ENCODE measurements at regions of chr6 and their contacts with region 1.

Region 1: DNA sequence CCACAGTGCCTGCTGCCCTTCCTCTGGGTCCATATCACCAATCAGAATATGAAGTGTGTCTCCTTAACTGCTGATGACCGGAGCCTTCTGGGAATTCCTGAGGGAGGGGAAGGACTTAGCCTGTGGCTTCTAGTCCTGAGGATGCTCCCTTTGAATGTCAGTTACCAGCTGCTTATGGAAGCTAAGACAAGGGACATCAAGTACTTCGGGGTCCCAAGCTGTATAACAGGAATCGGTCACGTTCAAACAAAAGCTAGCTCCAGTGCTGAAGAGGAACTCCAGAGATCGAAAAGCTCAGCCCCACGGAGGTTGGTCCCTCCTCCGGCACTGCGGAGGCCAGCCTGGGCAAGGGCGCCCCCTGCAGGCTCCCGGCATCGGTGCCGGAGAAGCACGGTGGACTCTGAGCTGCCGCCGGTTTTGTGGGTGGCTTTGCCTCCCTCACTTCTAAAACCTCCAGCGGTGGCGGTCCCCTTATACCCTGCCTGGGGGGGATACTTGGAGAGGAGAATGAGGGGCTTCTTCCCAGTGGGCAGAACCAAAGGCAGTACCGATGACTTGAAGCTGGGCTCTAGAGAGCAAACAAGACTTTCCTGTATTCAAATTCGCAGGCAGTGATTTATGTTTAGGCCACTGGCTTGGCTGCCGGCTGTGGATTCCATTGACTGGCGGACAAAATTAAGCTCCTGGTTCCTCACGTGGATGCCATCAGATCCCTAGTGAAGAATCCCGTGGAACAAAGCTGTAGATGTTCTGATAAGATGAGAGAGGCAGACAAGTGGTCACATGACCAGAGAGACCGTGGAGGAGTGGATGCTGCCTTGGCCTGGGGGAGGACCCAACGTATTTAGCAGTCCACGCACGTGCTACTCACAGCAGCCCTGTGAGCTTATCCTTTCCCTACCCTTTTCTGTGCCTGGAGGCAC is 16.2 kb upstream of the UBR2 start:
- DNase-seq: peak; percentile 87
- H3K4me3 ChIP-seq: peak overlapping the region; percentile 37 to 84 (median 47)
- H3K27ac ChIP-seq: peak overlapping the region; percentile 5
- H3K4me1 ChIP-seq: peaks cover 2% of the 10 kb centered on the region
- H3K27me3 ChIP-seq: peaks cover 0 to 2% of the 10 kb centered on the region in 2 experiments
- CTCF ChIP-seq: peak; percentile 99 to 100
- POLR2A ChIP-seq: no peak

Region 2: DNA sequence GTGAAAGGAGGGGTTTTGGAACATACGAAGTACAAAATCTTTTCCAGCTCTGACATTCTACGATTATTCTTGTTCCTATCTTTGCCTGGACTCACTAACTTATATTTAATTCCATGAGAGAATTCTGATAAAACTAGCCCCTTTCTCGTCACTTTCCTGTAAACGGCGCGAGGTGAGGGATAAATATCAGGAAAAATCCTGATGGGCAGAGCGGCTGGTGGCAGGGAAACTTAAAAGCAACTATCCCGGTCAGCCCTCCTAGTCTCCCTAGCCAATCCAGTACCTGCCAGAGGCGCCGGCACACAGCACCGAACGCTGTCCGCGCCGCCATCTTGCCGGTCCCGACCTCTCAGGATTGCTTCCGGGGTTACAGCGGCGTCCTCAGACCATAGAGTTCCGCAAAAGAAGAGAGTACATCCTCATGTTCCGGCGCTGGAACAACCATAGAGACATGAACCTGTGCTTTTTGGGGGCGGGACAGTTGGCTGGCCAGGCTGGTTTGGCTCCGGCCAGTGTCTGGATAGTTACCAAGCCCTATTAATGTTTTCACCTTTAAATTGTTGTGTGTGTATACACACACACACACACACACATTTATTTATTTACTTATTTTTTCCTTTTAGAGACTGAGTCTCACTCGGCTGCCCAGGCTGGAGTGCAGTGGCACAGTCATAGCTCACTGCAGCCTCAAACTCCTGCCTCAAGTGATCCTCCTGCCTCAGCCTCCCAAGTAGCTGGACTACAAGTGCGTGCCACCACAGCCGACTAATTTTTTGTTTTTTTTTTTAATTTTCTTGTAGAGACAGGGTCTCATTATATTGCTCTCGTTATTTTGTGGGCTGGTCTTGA is 329.9 kb before region 1 on chr6 and contains the start of gene MRPS10:
- CTCF ChIA-PET with region 1: interaction called, 71 read pairs
- POLR2A ChIA-PET with region 1: no interaction called
- dilution Hi-C with region 1: no loop called
- intact Hi-C with region 1: loop called (anchors 1 kb)
- DNase-seq: peak; percentile 94
- H3K4me3 ChIP-seq: peak within 1 kb of the TSS; percentile 49 to 99 (median 92)
- H3K27ac ChIP-seq: peak within 1 kb of the TSS; percentile 77
- H3K4me1 ChIP-seq: peaks cover 5% of the 10 kb centered on the region
- H3K27me3 ChIP-seq: no peaks in the 10 kb centered on the region
- CTCF ChIP-seq: no peak
- POLR2A ChIP-seq: peak; percentile 90
- total RNA-seq, gene MRPS10: 35.3 and 37.7 TPM in 2 replicates

Region 3: DNA sequence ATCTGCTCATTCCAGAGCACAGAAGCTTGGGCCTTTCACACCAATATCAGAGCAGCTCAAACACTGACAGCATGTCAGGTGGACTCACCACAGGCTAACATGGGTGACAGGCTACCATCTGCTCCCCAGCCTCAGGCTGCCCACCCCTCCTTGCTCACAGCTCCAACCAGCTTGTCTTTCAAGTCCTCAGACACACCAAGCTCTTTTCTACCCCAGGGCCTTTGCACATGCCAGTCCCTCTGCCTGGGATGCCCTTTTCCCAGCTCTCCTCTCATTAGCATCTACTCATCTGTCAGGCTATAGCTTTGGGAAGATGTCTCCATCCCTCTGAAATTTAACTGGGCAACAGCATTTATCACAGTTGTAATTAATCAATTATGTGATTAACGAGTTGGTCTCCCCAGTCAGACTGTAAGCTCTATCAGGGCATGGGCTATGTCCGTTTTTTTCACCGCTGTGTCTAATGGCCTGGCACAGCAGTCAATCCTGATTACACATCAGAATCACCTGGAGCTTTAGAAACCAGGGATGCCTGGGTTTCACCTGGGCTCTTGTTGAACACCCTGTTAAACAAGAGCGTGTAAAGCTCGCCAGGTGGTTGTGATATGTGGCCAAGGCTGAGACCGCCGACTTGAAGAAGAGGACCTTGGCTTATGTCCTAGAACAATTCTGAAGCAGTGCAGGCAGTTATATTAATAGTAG is 241.1 kb before region 1 on chr6:
- CTCF ChIA-PET with region 1: interaction called, 62 read pairs
- POLR2A ChIA-PET with region 1: no interaction called
- dilution Hi-C with region 1: no loop called
- intact Hi-C with region 1: loop called (anchors 1 kb)
- DNase-seq: no peak
- H3K4me3 ChIP-seq: no peak overlapping the region
- H3K27ac ChIP-seq: no peak overlapping the region
- H3K4me1 ChIP-seq: no peaks in the 10 kb centered on the region
- H3K27me3 ChIP-seq: peaks cover 0 to 6% of the 10 kb centered on the region in 2 experiments
- CTCF ChIP-seq: no peak
- POLR2A ChIP-seq: no peak

Region 4: DNA sequence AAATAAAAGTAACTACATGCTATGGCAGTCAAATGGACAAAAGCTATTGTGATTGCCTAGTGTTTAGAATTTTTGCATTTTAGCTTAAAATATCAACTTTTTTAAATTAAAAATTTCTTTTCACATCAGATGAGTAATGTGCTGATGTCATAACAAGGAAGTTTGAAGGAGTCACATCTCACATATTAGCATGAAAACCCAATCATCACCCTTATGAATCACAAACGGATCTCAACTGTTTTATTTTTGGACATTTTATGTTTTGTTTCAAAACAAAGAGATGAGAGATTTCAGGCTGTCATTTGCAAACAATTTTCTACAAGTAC is 42.3 kb before region 1 on chr6:
- CTCF ChIA-PET with region 1: interaction called, 25 read pairs
- POLR2A ChIA-PET with region 1: no interaction called
- dilution Hi-C with region 1: no loop called
- intact Hi-C with region 1: no loop called
- DNase-seq: peak; percentile 31
- H3K4me3 ChIP-seq: no peak overlapping the region
- H3K27ac ChIP-seq: no peak overlapping the region
- H3K4me1 ChIP-seq: peaks cover 3% of the 10 kb centered on the region
- H3K27me3 ChIP-seq: peaks cover 3% of the 10 kb centered on the region in 2 experiments
- CTCF ChIP-seq: no peak
- POLR2A ChIP-seq: no peak

Region 5: GRCh38 chr6:42563697-42564505 is 16.2 kb after region 1 on chr6 and contains the start of gene UBR2:
- CTCF ChIA-PET with region 1: interaction called, 86 read pairs
- POLR2A ChIA-PET with region 1: interaction called, 3 read pairs
- dilution Hi-C with region 1: no loop called
- intact Hi-C with region 1: no loop called
- DNase-seq: peak; percentile 98
- H3K4me3 ChIP-seq: peak within 1 kb of the TSS; percentile 93 to 97 (median 94)
- H3K27ac ChIP-seq: peak within 1 kb of the TSS; percentile 59
- H3K4me1 ChIP-seq: peaks cover 11% of the 10 kb centered on the region
- H3K27me3 ChIP-seq: peaks cover 0 to 3% of the 10 kb centered on the region in 2 experiments
- CTCF ChIP-seq: peak in 1 of 2 donors; percentile 27
- POLR2A ChIP-seq: peak; percentile 56
- total RNA-seq, gene UBR2: 18.6 and 22.3 TPM in 2 replicates

Region 6: GRCh38 chr6:42871711-42872110 is 324.0 kb after region 1 on chr6:
- CTCF ChIA-PET with region 1: no interaction called
- POLR2A ChIA-PET with region 1: no interaction called
- dilution Hi-C with region 1: no loop called
- intact Hi-C with region 1: no loop called
- DNase-seq: no peak
- H3K4me3 ChIP-seq: no peak overlapping the region
- H3K27ac ChIP-seq: no peak overlapping the region
- H3K4me1 ChIP-seq: no peaks in the 10 kb centered on the region
- H3K27me3 ChIP-seq: no peaks in the 10 kb centered on the region
- CTCF ChIP-seq: no peak
- POLR2A ChIP-seq: no peak

Measured in endothelial cell of umbilical vein (primary cell).